ENCODE measurements at regions of chr5 and their contacts with region 1.

Region 1: DNA sequence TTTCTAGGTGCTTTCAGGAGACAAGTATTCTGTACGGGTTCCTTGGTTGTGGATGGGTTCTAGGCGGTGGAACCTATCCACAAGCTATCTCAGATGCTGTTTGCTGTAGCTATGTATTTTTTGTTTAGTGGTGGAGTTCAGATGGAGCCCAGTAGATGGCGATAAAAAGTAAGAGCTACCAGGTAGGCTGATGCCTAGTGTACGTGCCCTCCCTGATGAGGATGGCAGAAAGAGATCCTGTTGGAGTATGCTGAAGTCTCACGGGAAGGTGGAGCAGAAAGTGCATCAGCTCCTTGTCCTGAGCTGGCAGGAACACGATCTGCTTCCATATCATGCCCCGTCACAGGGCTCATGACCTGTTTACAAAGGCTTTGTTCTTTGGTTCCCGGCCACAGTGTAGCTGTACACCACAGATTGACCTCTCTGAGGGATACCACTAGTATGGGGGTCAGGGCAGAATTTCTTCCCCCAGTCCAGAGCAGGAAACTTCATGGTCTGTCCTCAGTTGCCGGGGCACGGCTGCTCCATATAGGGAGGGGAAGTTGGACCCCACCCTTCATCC is 12.6 kb upstream of the UGT3A2 start:
- DNase-seq: no peak
- H3K4me3 ChIP-seq: no peak overlapping the region
- H3K27me3 ChIP-seq: peaks cover 8% of the 10 kb centered on the region
- CTCF ChIP-seq: peak; percentile 78

Region 2: DNA sequence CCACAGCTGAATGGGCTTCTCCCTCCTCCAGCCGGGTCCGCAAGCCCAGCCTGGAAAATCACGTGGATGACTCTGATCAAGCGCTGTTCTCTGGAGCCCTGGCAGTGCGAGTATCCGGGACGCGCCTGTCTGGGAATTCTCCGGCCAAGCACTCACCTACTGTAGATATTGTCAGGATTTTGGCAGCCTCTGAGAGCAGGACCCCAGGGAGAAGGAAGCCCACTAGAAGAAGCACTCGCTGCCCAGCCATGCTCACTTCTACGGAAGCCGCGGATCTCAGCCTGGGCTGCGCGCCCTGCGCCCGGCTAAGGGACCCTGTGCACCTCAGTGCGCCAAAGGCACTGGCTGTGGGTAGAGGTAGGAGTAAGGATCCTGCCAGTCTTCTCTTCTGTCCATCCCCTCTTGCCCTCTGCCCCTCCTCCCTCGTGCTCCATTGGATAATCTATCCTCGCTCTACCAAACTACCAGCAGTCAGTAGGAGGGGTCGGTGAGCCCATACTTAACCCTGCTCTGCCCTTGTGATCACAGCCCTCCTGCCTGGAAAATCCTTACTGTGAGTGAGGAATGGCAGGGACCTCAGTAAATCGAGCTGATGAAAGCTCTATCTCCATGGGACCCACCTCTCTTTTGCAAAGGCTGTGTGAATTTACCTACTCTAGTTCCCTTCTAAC is 12.6 kb before region 1 on chr5 and contains the start of gene UGT3A2:
- CTCF ChIA-PET with region 1: interaction called, 27 read pairs
- POLR2A ChIA-PET with region 1: no interaction called
- DNase-seq: no peak
- H3K4me3 ChIP-seq: no peak within 1 kb of the TSS
- H3K27me3 ChIP-seq: peaks cover 23% of the 10 kb centered on the region
- CTCF ChIP-seq: no peak
- polyA plus RNA-seq, gene UGT3A2: not detected in 2 replicates

Region 3: DNA sequence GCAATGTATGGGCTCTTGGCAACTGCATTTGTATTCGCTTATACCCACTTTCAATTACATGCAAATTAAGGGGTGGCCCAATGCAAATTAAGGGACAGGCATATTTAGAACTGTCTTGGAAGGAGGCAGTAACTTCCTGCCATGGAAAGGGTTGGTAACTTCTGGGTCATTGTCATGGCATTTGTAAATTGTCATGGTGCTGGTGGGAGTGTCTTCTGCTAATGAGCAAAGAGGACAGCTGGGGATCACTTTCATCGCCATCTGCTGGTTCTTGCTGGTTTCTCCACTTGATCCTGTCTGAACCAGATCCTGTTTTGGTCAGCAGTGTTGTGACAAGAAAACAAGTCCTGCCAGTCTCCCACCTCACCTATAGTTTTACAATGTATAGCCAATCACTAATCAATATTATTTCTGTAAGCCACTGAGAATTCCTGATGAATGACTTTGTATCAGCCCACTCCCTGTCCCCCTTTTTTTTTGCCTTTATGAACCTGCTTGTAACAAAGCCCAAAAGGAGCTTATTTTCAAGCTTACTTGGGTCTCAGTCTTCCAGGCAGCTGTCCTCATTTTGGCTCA is 10.8 kb after region 1 on chr5:
- CTCF ChIA-PET with region 1: interaction called, 38 read pairs
- POLR2A ChIA-PET with region 1: no interaction called
- DNase-seq: no peak
- H3K4me3 ChIP-seq: no peak overlapping the region
- H3K27me3 ChIP-seq: no peaks in the 10 kb centered on the region; the same call in 1 of the 2 replicates
- CTCF ChIP-seq: peak; percentile 55

Region 4: GRCh38 chr5:36096486-36096885 is 17.2 kb after region 1 on chr5:
- CTCF ChIA-PET with region 1: interaction called, 10 read pairs
- POLR2A ChIA-PET with region 1: no interaction called
- DNase-seq: no peak
- H3K4me3 ChIP-seq: no peak overlapping the region
- H3K27me3 ChIP-seq: no peaks in the 10 kb centered on the region; the same call in 1 of the 2 replicates
- CTCF ChIP-seq: no peak

Region 5: DNA sequence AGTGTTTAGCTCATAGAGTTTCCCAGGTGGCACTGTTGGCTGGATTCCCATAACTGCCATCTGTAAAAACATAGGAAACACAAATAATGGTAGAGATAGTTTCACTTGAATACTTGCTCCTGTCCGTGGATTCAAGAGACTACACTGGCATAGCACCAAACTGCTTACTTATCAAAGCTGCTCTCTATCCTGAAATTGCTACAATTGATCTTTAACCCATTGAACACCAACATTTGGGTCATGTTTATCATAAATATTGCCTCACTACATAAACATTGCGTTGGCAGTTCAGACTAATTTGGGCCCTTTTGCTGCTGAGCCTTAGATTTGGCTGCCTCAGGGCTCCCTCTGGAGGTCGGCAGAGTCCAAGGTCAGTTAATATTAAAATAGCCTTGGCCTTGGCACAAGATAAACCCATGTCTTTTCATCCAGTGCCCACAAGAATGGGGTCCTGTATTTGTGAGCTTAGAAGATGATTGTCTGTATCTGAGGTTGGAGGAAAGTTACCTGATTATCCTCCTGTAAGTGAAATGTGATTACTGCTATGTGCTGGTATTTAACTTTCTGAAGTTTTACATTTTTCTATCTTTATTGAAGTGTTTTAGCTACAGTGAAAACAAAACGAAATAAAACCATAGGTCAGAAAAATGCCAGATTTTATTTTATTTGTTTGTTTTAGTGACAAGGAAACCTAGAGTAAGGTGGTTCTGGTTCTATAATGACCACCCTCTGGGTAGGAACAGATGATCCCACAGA is 226.5 kb after region 1 on chr5:
- CTCF ChIA-PET with region 1: interaction called, 31 read pairs
- POLR2A ChIA-PET with region 1: interaction called, 4 read pairs
- DNase-seq: no peak
- H3K4me3 ChIP-seq: no peak overlapping the region
- H3K27me3 ChIP-seq: no peaks in the 10 kb centered on the region; the same call in 1 of the 2 replicates
- CTCF ChIP-seq: peak; percentile 80

Measured in BJ (cell line).